Left colon (tissue), 2 donors: ENCODE measurements at regions of chr11 and their contacts with region 1.

Region 1: GRCh38 chr11:72471005-72471898 is 36.9 kb upstream of the CLPB start:
- DNase-seq: peak; percentile 51 to 55
- ATAC-seq: peak; percentile 80

Region 2: GRCh38 chr11:72119198-72119597 is 352.1 kb before region 1 on chr11:
- intact Hi-C with region 1: no loop called
- DNase-seq: no peak
- ATAC-seq: no peak

Region 3: GRCh38 chr11:72352859-72353551 is 118.2 kb before region 1 on chr11:
- intact Hi-C with region 1: no loop called
- DNase-seq: no peak
- ATAC-seq: no peak

Region 4: GRCh38 chr11:72573072-72573854 is 102.0 kb after region 1 on chr11:
- intact Hi-C with region 1: loop called in 1 of 2 experiments (anchors 10 kb)
- DNase-seq: peak in 1 of 2 donors; percentile 37
- ATAC-seq: peak; percentile 71

Region 5: GRCh38 chr11:72683782-72684200 is 212.5 kb after region 1 on chr11:
- intact Hi-C with region 1: loop called in 1 of 2 experiments (anchors 10 kb)
- DNase-seq: peak in 1 of 2 donors; percentile 72
- ATAC-seq: peak; percentile 62